Activated T-helper 1 cell treated with anti-CD3 and anti-CD28 coated beads, Interleukin-12 subunit alpha, Interleukin-12 subunit beta, Interleukin-2, Interleukin-4 antibody, amounts not matched to agents 30 ng/mL and 10 ng/mL and 1 ng/mL, durations not matched to agents 14 hours and 24 hours and 36 hours (primary cell): ENCODE measurements at regions of chr4 and their contacts with region 1.

Region 1: DNA sequence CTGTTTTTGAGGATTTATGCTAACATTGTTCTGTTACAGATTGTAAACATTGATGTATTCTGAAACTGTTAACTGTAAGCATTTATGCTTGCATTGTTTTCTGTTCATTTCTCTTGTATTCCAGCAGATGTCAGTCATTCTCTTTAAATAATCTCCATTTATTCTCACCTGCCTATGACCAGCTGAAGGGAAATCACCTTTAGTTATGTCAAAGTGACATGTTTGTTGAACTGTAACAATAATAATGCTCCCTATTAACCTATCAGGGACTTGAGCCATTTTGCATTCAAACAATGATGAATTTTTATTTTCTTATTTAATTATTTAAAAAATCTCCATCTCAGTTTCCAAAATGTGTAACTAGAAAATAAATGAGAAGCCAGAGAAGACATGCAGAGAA is 58.0 kb downstream of the SPCS3 start:
- DNase-seq: no peak
- H3K4me3 Mint-ChIP-seq: no peak overlapping the region
- H3K27ac Mint-ChIP-seq: no peak overlapping the region
- H3K4me1 Mint-ChIP-seq: peaks cover 5% of the 10 kb centered on the region
- H3K27me3 Mint-ChIP-seq: peaks cover 15% of the 10 kb centered on the region

Region 2: DNA sequence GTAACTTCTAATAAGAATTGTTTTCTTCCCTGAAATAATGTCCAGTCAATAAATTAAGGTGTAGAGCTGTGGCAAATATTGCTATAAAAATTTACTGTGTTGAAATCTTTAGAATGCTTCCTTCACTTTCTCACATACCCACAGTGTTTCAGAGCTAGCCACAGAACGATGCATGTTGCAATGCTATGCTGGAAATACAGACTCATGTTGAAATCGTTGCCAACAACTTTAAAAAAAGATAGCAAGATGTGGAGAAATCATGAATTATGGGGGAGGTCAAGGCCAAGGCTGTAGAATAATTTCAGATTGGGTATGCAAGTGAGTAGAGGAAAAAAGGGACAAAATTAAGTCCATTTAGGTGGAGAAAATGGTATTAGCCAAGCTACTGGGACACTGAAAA is 210.1 kb after region 1 on chr4:
- intact Hi-C with region 1: no loop called
- DNase-seq: no peak
- H3K4me3 Mint-ChIP-seq: no peak overlapping the region
- H3K27ac Mint-ChIP-seq: no peak overlapping the region
- H3K4me1 Mint-ChIP-seq: no peaks in the 10 kb centered on the region
- H3K27me3 Mint-ChIP-seq: no peaks in the 10 kb centered on the region

Region 3: GRCh38 chr4:176635372-176636261 is 257.8 kb after region 1 on chr4:
- intact Hi-C with region 1: loop called (anchors 10 kb)
- DNase-seq: no peak
- H3K4me3 Mint-ChIP-seq: no peak overlapping the region
- H3K27ac Mint-ChIP-seq: no peak overlapping the region
- H3K4me1 Mint-ChIP-seq: no peaks in the 10 kb centered on the region
- H3K27me3 Mint-ChIP-seq: no peaks in the 10 kb centered on the region

Region 4: DNA sequence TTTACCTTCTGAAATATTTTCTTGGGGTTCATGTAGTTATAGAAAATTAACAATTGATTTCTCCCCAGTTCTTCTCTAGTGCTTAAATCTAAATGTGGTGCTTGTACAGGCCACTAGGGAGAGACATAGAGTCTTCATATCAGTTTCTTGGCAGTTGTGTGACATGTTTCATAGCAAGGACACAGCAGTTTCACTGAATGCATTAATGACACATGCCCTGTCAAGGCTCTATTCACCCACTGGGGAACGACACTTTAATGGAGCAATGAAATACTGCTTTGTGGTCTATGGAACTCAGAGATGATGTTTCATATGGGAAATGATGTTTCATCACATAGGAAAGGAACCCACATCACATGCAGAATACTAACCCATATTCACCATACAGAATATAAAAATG is 412.2 kb after region 1 on chr4:
- intact Hi-C with region 1: loop called (anchors 1 kb)
- DNase-seq: no peak
- H3K4me3 Mint-ChIP-seq: no peak overlapping the region
- H3K27ac Mint-ChIP-seq: no peak overlapping the region
- H3K4me1 Mint-ChIP-seq: no peaks in the 10 kb centered on the region
- H3K27me3 Mint-ChIP-seq: peaks cover 41% of the 10 kb centered on the region

Region 5: GRCh38 chr4:177047070-177047850 is 669.5 kb after region 1 on chr4:
- intact Hi-C with region 1: loop called (anchors 1 kb)
- DNase-seq: peak; percentile 25
- H3K4me3 Mint-ChIP-seq: no peak overlapping the region
- H3K27ac Mint-ChIP-seq: no peak overlapping the region
- H3K4me1 Mint-ChIP-seq: no peaks in the 10 kb centered on the region
- H3K27me3 Mint-ChIP-seq: peaks cover 6% of the 10 kb centered on the region